Activated B cell treated with CpG ODN at 0.5 μM for 24 hours (primary cell): ENCODE measurements at regions of chr20 and their contacts with region 1.

Region 1: GRCh38 chr20:5642155-5642981 is 107.8 kb upstream of the SHLD1 start:
- DNase-seq: no peak
- ATAC-seq: no peak
- H3K4me3 Mint-ChIP-seq: peak overlapping the region; percentile 3
- H3K27ac Mint-ChIP-seq: peak overlapping the region; percentile 50
- H3K4me1 Mint-ChIP-seq: peaks cover 55% of the 10 kb centered on the region
- H3K27me3 Mint-ChIP-seq: no peaks in the 10 kb centered on the region
- CTCF ChIP-seq: no peak

Region 2: GRCh38 chr20:4985658-4986057 is 656.7 kb before region 1 on chr20:
- CTCF ChIA-PET with region 1: no interaction called
- POLR2A ChIA-PET with region 1: no interaction called
- intact Hi-C with region 1: loop called (anchors 2 kb)
- DNase-seq: no peak
- ATAC-seq: peak; percentile 59
- H3K4me3 Mint-ChIP-seq: peak overlapping the region; percentile 66
- H3K27ac Mint-ChIP-seq: peak overlapping the region; percentile 92
- H3K4me1 Mint-ChIP-seq: peaks cover 92% of the 10 kb centered on the region
- H3K27me3 Mint-ChIP-seq: no peaks in the 10 kb centered on the region
- CTCF ChIP-seq: no peak

Region 3: GRCh38 chr20:5602346-5602745 is 40.0 kb before region 1 on chr20:
- CTCF ChIA-PET with region 1: no interaction called
- POLR2A ChIA-PET with region 1: interaction called, 37 read pairs
- intact Hi-C with region 1: no loop called
- DNase-seq: no peak
- ATAC-seq: no peak
- H3K4me3 Mint-ChIP-seq: no peak overlapping the region
- H3K27ac Mint-ChIP-seq: peak overlapping the region; percentile 62
- H3K4me1 Mint-ChIP-seq: peaks cover 75% of the 10 kb centered on the region
- H3K27me3 Mint-ChIP-seq: no peaks in the 10 kb centered on the region
- CTCF ChIP-seq: no peak

Region 4: DNA sequence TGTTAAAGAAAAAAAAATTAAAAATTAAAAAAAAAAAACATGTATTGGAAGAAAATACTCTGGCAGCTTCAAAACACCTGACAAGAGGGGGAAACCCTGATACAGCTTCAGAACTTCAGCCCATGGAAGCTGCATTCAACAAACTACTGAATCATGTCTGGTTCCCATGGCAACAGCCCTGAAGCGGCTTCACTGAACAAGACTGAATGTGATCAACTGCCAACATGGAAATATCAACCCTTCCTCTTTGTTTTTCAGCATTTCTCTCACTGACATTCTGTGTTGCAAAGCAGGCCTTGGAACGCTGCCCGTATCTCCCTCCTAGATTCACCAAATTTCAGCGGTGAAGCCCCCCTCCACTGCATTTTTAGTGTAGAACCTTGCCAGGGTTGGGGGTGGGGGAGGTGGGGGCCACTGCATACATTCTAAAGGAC is 16.6 kb after region 1 on chr20:
- CTCF ChIA-PET with region 1: interaction called, 3 read pairs
- POLR2A ChIA-PET with region 1: interaction called, 77 read pairs
- intact Hi-C with region 1: loop called (anchors 1 kb)
- DNase-seq: peak; percentile 38
- ATAC-seq: peak; percentile 81
- H3K4me3 Mint-ChIP-seq: peak overlapping the region; percentile 54
- H3K27ac Mint-ChIP-seq: peak overlapping the region; percentile 88
- H3K4me1 Mint-ChIP-seq: peaks cover 54% of the 10 kb centered on the region
- H3K27me3 Mint-ChIP-seq: no peaks in the 10 kb centered on the region
- CTCF ChIP-seq: no peak

Region 5: GRCh38 chr20:5674176-5674660 is 31.9 kb after region 1 on chr20:
- CTCF ChIA-PET with region 1: interaction called, 4 read pairs
- POLR2A ChIA-PET with region 1: interaction called, 14 read pairs
- intact Hi-C with region 1: loop called (anchors 1 kb)
- DNase-seq: no peak
- ATAC-seq: peak; percentile 87
- H3K4me3 Mint-ChIP-seq: peak overlapping the region; percentile 13
- H3K27ac Mint-ChIP-seq: peak overlapping the region; percentile 77
- H3K4me1 Mint-ChIP-seq: peaks cover 30% of the 10 kb centered on the region
- H3K27me3 Mint-ChIP-seq: no peaks in the 10 kb centered on the region
- CTCF ChIP-seq: no peak

Region 6: DNA sequence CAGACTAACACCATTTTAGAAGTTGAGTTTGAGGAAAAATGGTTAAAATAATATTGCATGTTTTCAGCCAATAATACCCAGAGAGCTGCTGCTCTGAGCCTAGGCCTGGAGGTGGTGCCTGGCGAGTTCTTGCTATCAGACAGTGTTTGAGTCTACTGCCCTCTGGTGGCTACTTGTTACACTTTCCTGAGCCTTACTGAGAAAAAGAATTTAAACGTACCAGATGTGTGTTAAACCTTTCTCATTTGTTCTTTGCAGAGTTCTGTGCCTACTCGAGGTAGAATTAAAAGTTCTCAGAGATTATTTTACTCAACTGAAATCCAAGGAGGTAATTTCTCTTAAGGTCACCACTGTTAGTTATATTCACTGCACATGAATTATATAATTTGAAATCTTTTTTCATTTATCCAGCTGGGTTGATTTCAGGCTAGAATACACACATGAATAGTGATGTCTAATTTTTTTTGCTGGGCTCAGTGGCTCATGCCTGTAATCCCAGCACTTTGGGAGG is 146.1 kb after region 1 on chr20:
- CTCF ChIA-PET with region 1: interaction called, 17 read pairs
- POLR2A ChIA-PET with region 1: no interaction called
- intact Hi-C with region 1: no loop called
- DNase-seq: no peak
- ATAC-seq: peak; percentile 99
- H3K4me3 Mint-ChIP-seq: no peak overlapping the region
- H3K27ac Mint-ChIP-seq: no peak overlapping the region
- H3K4me1 Mint-ChIP-seq: peaks cover 15% of the 10 kb centered on the region
- H3K27me3 Mint-ChIP-seq: no peaks in the 10 kb centered on the region
- CTCF ChIP-seq: no peak

Region 7: GRCh38 chr20:5835321-5835821 is 193.0 kb after region 1 on chr20:
- CTCF ChIA-PET with region 1: no interaction called
- POLR2A ChIA-PET with region 1: no interaction called
- intact Hi-C with region 1: no loop called
- DNase-seq: no peak
- ATAC-seq: peak; percentile 21
- H3K4me3 Mint-ChIP-seq: no peak overlapping the region
- H3K27ac Mint-ChIP-seq: no peak overlapping the region
- H3K4me1 Mint-ChIP-seq: peaks cover 15% of the 10 kb centered on the region
- H3K27me3 Mint-ChIP-seq: no peaks in the 10 kb centered on the region
- CTCF ChIP-seq: no peak